ENCODE measurements at regions of chr14 and their contacts with region 1.

Region 1: DNA sequence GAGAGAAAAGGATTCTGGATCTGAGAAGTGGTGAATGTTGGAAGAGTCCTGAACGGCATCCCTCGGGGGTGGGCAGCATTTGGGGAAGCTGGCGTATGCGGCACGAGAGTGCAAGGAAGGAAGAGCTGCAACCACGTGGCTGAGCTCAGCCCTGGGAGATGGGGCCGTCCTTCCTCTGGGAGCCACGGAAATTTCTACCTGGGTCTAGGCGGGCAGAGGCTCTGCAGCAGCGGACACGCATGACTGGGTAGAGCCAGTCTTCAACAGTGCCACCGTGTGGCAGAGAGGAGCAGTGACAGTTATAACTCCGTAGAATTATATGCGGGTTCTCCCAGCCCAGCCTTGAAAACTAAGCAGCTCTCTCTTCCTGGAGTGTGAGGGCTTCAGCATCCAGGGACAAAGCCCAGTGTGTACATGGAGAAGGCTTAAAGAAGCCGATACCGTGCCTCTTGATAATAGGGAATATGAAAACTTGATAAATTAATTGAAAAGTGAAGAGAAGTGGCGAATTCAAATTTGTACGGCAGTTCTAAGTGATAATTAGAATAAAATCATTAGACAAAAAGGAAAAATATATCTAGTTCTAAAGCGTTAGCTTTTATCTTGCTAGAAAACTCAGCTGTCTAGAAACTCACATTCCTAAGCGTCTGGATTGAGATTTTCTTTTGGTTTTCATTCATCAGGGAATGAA is 82.9 kb upstream of the STXBP6 start:
- DNase-seq: peak; percentile 28 to 72 (median 64)
- H3K4me3 ChIP-seq: no peak overlapping the region
- H3K27ac ChIP-seq: no peak overlapping the region
- H3K4me1 ChIP-seq: no peaks in the 10 kb centered on the region
- H3K27me3 ChIP-seq: peaks cover 9% of the 10 kb centered on the region
- CTCF ChIP-seq: peak; percentile 55 to 82 (median 72)
- POLR2A ChIP-seq: no peak

Region 2: GRCh38 chr14:24734878-24735500 is 397.9 kb before region 1 on chr14:
- intact Hi-C with region 1: loop called in 1 of 2 experiments (anchors 10 kb)
- DNase-seq: peak; percentile 23 to 66 (median 37)
- H3K4me3 ChIP-seq: no peak overlapping the region
- H3K27ac ChIP-seq: no peak overlapping the region
- H3K4me1 ChIP-seq: no peaks in the 10 kb centered on the region
- H3K27me3 ChIP-seq: no peaks in the 10 kb centered on the region
- CTCF ChIP-seq: peak; percentile 54 to 74 (median 64)
- POLR2A ChIP-seq: no peak